ENCODE measurements at regions of chr3 and their contacts with region 1.

Region 1: GRCh38 chr3:101195951-101196713 is 124.2 kb downstream of the IMPG2 start:
- DNase-seq: peak; percentile 72
- H3K4me3 Mint-ChIP-seq: no peak overlapping the region
- H3K27ac Mint-ChIP-seq: peak overlapping the region; percentile 64
- H3K4me1 Mint-ChIP-seq: peaks cover 23% of the 10 kb centered on the region
- H3K27me3 Mint-ChIP-seq: no peaks in the 10 kb centered on the region
- CTCF ChIP-seq: peak; percentile 81

Region 2: GRCh38 chr3:100590114-100590839 is 605.9 kb before region 1 on chr3:
- CTCF ChIA-PET with region 1: no interaction called
- POLR2A ChIA-PET with region 1: no interaction called
- intact Hi-C with region 1: loop called (anchors 5 kb)
- DNase-seq: peak; percentile 83
- H3K4me3 Mint-ChIP-seq: no peak overlapping the region
- H3K27ac Mint-ChIP-seq: no peak overlapping the region
- H3K4me1 Mint-ChIP-seq: peaks cover 8% of the 10 kb centered on the region
- H3K27me3 Mint-ChIP-seq: no peaks in the 10 kb centered on the region
- CTCF ChIP-seq: peak; percentile 75

Region 3: GRCh38 chr3:100737334-100737733 is 458.8 kb before region 1 on chr3:
- CTCF ChIA-PET with region 1: interaction called, 37 read pairs
- POLR2A ChIA-PET with region 1: no interaction called
- intact Hi-C with region 1: loop called (anchors 1 kb)
- DNase-seq: peak; percentile 35
- H3K4me3 Mint-ChIP-seq: no peak overlapping the region
- H3K27ac Mint-ChIP-seq: no peak overlapping the region
- H3K4me1 Mint-ChIP-seq: peaks cover 6% of the 10 kb centered on the region
- H3K27me3 Mint-ChIP-seq: no peaks in the 10 kb centered on the region
- CTCF ChIP-seq: peak; percentile 29

Region 4: GRCh38 chr3:100893590-100893989 is 302.5 kb before region 1 on chr3:
- CTCF ChIA-PET with region 1: interaction called, 36 read pairs
- POLR2A ChIA-PET with region 1: interaction called, 4 read pairs
- intact Hi-C with region 1: loop called (anchors 1 kb)
- DNase-seq: peak; percentile 50
- H3K4me3 Mint-ChIP-seq: no peak overlapping the region
- H3K27ac Mint-ChIP-seq: no peak overlapping the region
- H3K4me1 Mint-ChIP-seq: peaks cover 22% of the 10 kb centered on the region
- H3K27me3 Mint-ChIP-seq: no peaks in the 10 kb centered on the region
- CTCF ChIP-seq: peak; percentile 59

Region 5: GRCh38 chr3:101036213-101036618 is 159.9 kb before region 1 on chr3:
- CTCF ChIA-PET with region 1: no interaction called
- POLR2A ChIA-PET with region 1: no interaction called
- intact Hi-C with region 1: loop called (anchors 10 kb)
- DNase-seq: peak; percentile 88
- H3K4me3 Mint-ChIP-seq: no peak overlapping the region
- H3K27ac Mint-ChIP-seq: peak overlapping the region; percentile 93
- H3K4me1 Mint-ChIP-seq: peaks cover 40% of the 10 kb centered on the region
- H3K27me3 Mint-ChIP-seq: no peaks in the 10 kb centered on the region
- CTCF ChIP-seq: no peak